WTC11 (cell line): ENCODE measurements at regions of chr12 and their contacts with region 1.

Region 1: DNA sequence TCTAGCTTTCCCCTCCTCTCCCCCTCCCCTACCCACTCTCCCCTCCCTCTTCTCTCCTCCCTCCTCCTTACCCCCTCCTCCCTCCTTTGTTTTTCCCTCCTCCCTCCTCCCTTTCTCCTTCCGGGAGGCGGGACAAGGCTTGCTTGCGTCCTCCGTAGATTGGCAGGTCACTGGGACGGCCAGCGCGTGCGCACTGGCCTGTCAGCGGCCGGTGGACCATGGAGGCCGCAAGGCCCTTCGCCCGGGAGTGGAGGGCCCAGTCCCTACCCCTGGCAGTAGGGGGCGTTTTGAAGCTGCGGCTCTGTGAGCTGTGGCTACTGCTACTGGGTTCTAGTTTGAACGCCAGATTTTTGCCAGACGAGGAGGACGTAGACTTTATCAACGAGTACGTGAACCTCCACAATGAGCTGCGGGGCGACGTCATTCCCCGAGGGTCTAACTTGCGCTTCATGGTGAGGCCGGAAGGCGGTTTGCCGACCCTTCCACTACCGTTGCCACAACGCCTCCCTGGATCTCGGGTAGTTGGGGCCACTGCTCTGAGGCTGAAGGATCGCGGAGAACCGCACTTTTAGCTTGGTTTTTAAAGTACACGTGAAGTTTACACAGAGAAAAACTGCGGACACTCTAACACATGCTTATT is at the start of gene GLIPR1L2:
- DNase-seq: peak; percentile 97
- ATAC-seq: peak; percentile 99
- H3K4me3 Mint-ChIP-seq: peak within 1 kb of the TSS; percentile 86
- H3K27ac Mint-ChIP-seq: peak within 1 kb of the TSS; percentile 96
- H3K4me1 Mint-ChIP-seq: peaks cover 20% of the 10 kb centered on the region
- H3K27me3 Mint-ChIP-seq: no peaks in the 10 kb centered on the region
- CTCF ChIP-seq: peak; percentile 69
- total RNA-seq, gene GLIPR1L2: 0.30 to 0.32 TPM in 2 of 3 replicates, not detected in the other

Region 2: DNA sequence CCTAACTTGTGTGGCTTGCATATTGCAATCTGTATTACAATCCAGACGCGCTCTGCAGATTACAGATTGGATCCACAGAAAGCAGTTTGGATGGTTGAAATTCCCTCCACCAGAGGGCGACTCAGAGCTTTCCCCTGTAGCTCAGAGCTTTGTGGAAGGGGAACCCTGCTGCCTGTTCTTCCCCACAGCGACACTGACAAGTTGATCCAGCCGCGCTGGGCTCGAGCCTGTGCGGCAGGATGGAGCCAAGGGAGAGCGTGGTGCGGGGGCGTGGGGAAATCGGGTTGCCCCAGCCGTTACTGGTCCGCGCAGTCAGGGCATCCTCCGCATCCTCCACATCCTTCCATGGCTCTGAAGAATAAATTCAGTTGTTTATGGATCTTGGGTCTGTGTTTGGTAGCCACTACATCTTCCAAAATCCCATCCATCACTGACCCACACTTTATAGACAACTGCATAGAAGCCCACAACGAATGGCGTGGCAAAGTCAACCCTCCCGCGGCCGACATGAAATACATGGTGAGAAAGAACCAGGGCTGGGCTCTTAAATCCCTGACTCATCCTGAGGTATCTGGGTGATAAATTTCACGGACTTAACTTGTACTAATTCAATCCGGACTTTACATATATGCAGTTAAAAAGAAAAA is 56.5 kb before region 1 on chr12 and contains the start of gene GLIPR1L1:
- CTCF ChIA-PET with region 1: interaction called, 16 read pairs
- POLR2A ChIA-PET with region 1: no interaction called
- DNase-seq: peak; percentile 96
- ATAC-seq: peak; percentile 91
- H3K4me3 Mint-ChIP-seq: peak within 1 kb of the TSS; percentile 81
- H3K27ac Mint-ChIP-seq: no peak within 1 kb of the TSS
- H3K4me1 Mint-ChIP-seq: peaks cover 9% of the 10 kb centered on the region
- H3K27me3 Mint-ChIP-seq: no peaks in the 10 kb centered on the region
- CTCF ChIP-seq: peak; percentile 86
- total RNA-seq, gene GLIPR1L1: 0.69 TPM in 1 of 3 replicates, not detected in the others

Region 3: DNA sequence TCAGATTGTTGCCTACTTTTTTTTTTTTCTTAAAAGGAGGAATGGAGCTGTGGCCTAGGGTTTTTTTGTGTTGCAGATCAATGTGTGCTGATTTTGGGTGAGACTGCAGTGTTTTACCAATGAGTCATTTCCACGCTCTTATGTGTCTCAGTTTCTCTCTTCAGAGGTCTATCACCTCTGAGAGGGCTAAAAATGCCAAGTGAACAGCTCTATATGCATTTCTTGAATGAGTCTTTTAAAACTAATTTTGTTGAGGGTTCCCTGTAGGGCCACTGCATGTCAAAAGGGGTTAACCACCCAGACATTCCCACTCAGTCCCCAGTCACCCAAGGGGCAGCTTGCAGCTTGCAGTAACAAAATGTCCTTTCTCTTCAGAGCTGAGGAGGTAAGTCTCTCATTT is 24.4 kb before region 1 on chr12:
- CTCF ChIA-PET with region 1: interaction called, 17 read pairs
- POLR2A ChIA-PET with region 1: no interaction called
- DNase-seq: no peak
- ATAC-seq: peak; percentile 71
- H3K4me3 Mint-ChIP-seq: peak overlapping the region; percentile 24
- H3K27ac Mint-ChIP-seq: peak overlapping the region; percentile 94
- H3K4me1 Mint-ChIP-seq: peaks cover 40% of the 10 kb centered on the region
- H3K27me3 Mint-ChIP-seq: no peaks in the 10 kb centered on the region
- CTCF ChIP-seq: no peak

Region 4: DNA sequence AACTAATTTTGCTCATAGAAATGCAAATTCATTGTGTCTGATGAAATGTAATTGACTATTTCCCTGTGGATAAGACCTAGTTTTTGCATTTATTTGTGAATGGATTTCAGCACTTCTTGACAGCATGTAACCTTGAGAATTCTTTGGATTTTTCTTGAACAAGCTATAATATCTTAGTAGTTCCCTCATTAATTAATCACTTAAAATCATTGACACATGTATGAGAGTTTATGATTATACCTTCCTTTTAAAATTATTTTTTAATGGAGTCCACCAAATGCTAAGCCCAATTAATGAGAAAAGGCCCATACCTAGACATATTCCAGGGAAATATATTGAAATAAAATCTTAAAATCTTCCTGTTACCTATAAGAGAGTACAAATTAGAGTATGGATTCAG is 16.7 kb after region 1 on chr12:
- CTCF ChIA-PET with region 1: interaction called, 10 read pairs
- POLR2A ChIA-PET with region 1: no interaction called
- DNase-seq: no peak
- ATAC-seq: no peak
- H3K4me3 Mint-ChIP-seq: no peak overlapping the region
- H3K27ac Mint-ChIP-seq: no peak overlapping the region
- H3K4me1 Mint-ChIP-seq: peaks cover 9% of the 10 kb centered on the region
- H3K27me3 Mint-ChIP-seq: no peaks in the 10 kb centered on the region
- CTCF ChIP-seq: no peak

Region 5: GRCh38 chr12:75483431-75483830 is 92.4 kb after region 1 on chr12:
- CTCF ChIA-PET with region 1: interaction called, 40 read pairs
- POLR2A ChIA-PET with region 1: interaction called, 3 read pairs
- DNase-seq: no peak
- ATAC-seq: no peak
- H3K4me3 Mint-ChIP-seq: no peak overlapping the region
- H3K27ac Mint-ChIP-seq: no peak overlapping the region; the same call in 1 of the 2 replicates
- H3K4me1 Mint-ChIP-seq: peaks cover 37% of the 10 kb centered on the region
- H3K27me3 Mint-ChIP-seq: no peaks in the 10 kb centered on the region
- CTCF ChIP-seq: no peak